CD8-positive, alpha-beta memory T cell (primary cell): ENCODE measurements at regions of chr19 and their contacts with region 1.

Region 1: DNA sequence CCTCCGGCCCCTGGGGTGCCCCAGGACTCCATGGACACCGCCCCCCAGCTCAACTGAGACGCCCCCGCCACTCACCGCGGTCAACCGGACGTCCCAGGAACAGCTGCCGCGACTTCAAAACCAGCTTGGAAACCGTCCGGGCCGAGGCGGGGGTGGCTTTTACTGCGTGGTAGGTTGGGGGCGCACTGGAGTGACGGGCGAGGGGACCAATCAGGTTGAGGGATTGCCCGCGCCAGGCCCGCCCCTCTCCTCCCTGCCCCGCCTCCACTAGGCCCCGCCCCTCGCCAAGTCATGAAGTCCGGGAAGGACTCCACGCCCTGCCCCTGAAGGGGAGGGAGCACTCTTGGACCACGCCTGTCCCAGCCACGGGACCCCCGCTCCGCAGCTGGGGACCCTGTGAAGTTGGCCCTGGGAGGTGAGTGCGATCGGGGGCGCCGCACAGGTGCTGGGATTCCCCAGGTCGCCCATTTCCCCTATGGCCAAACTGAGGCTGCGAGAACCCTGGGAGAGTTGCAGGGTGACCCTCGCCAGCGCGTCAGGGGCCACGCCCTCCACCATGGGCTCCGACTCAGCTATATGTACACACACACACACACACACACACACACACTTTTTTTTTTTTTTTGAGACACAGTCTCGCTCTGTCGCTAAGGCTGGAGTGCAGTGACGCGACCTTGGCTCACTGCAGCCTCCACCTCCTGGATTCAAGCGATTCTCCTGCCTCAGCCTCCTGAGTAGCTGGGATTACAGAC is at the start of gene PLIN3:
- DNase-seq: peak; percentile 72 to 88 (median 84)
- H3K4me3 ChIP-seq: peak within 1 kb of the TSS; percentile 83
- H3K4me3 Mint-ChIP-seq: peak within 1 kb of the TSS; percentile 78 to 89 (median 82)
- H3K27ac ChIP-seq: peak within 1 kb of the TSS; percentile 71
- H3K27ac Mint-ChIP-seq: peak within 1 kb of the TSS; percentile 10 to 88 (median 66)
- H3K4me1 ChIP-seq: peaks cover 7% of the 10 kb centered on the region
- H3K4me1 Mint-ChIP-seq: peaks cover 10 to 18% (median 12%) of the 10 kb centered on the region in 3 donors
- H3K27me3 ChIP-seq: no peaks in the 10 kb centered on the region
- H3K27me3 Mint-ChIP-seq: no peaks in the 10 kb centered on the region
- total RNA-seq, gene PLIN3: 12.3 to 15.4 TPM

Region 2: GRCh38 chr19:4909897-4910593 is 42.3 kb after region 1 on chr19:
- CTCF ChIA-PET with region 1: interaction called, 124 read pairs
- POLR2A ChIA-PET with region 1: interaction called, 9 read pairs
- DNase-seq: peak; percentile 90 to 95 (median 92)
- H3K4me3 ChIP-seq: peak overlapping the region; percentile 73
- H3K4me3 Mint-ChIP-seq: peak overlapping the region; percentile 88 to 100 (median 99)
- H3K27ac ChIP-seq: no peak overlapping the region
- H3K27ac Mint-ChIP-seq: peak overlapping the region in 7 of 8 donors; percentile 32 to 96 (median 84)
- H3K4me1 ChIP-seq: peaks cover 61% of the 10 kb centered on the region
- H3K4me1 Mint-ChIP-seq: peaks cover 52 to 77% (median 55%) of the 10 kb centered on the region in 3 donors
- H3K27me3 ChIP-seq: no peaks in the 10 kb centered on the region
- H3K27me3 Mint-ChIP-seq: peaks cover 0 to 4% of the 10 kb centered on the region in 2 donors

Region 3: GRCh38 chr19:4916292-4917082 is 48.8 kb after region 1 on chr19:
- CTCF ChIA-PET with region 1: interaction called, 124 read pairs
- POLR2A ChIA-PET with region 1: interaction called, 11 read pairs
- DNase-seq: peak; percentile 42 to 71 (median 47)
- H3K4me3 ChIP-seq: peak overlapping the region; percentile 97
- H3K4me3 Mint-ChIP-seq: peak overlapping the region; percentile 97 to 100 (median 99)
- H3K27ac ChIP-seq: peak overlapping the region; percentile 81
- H3K27ac Mint-ChIP-seq: peak overlapping the region; percentile 95 to 100 (median 98)
- H3K4me1 ChIP-seq: peaks cover 44% of the 10 kb centered on the region
- H3K4me1 Mint-ChIP-seq: peaks cover 32 to 43% (median 35%) of the 10 kb centered on the region in 3 donors
- H3K27me3 ChIP-seq: no peaks in the 10 kb centered on the region
- H3K27me3 Mint-ChIP-seq: peaks cover 0 to 2% of the 10 kb centered on the region in 2 donors

Region 4: DNA sequence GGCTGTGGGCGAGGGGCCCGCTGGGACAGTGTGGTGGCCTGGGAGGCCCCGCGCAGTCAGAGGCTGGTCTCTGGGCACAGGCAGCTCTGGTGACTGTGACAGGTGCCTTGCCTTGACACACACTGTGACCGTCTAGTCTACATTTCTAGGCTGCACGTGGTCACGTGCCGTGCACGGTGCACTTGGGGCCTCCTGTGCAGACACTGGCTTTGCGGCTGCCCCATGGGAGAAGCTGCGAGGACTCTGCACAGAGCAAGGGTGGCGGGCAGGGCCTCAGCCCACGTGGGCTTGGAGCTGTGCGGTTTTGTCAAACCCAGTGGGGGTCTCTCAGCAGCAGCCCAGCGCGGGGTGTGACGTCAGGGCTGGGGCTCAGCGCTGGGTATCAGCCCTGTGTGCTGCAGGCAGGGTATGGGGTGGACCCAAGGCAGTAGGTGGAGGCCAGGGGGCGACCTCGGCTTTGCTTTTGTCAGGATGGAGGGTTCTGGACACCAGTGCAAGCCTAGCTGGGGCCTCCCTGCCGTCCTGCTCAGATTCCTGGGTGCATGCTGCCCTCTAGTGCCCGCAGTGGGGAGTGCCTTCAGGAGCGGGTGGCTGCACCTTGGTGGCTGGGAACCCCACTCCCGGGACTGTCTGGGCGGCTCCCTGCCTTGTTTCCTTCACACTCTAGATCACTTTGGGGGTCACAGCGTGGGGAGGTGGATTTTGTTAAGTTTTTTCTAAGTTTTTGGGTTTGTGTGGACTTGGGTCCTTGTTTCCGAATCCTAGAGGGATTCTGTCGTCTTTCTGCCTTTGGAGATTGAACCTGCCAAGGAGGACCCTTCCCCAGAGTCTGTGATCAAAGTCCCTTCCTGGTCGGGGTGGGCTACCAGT is 163.8 kb after region 1 on chr19:
- CTCF ChIA-PET with region 1: interaction called, 58 read pairs
- POLR2A ChIA-PET with region 1: no interaction called
- DNase-seq: peak; percentile 64 to 83 (median 74)
- H3K4me3 ChIP-seq: no peak overlapping the region
- H3K4me3 Mint-ChIP-seq: no peak overlapping the region
- H3K27ac ChIP-seq: no peak overlapping the region
- H3K27ac Mint-ChIP-seq: peak overlapping the region in 2 of 8 donors; percentile 14 to 61
- H3K4me1 ChIP-seq: no peaks in the 10 kb centered on the region
- H3K4me1 Mint-ChIP-seq: peaks cover 9 to 21% (median 13%) of the 10 kb centered on the region in 3 donors
- H3K27me3 ChIP-seq: no peaks in the 10 kb centered on the region
- H3K27me3 Mint-ChIP-seq: no peaks in the 10 kb centered on the region